Heart right ventricle (tissue), 16 donors: ENCODE measurements at regions of chr14 and their contacts with region 1.

Region 1: GRCh38 chr14:72651081-72651480 is 242.8 kb downstream of the DPF3 start:
- DNase-seq: no peak
- ATAC-seq: peak in 6 of 8 donors; percentile 26 to 57 (median 46)
- H3K4me3 ChIP-seq: no peak overlapping the region
- H3K27ac ChIP-seq: no peak overlapping the region
- H3K4me1 ChIP-seq: peaks cover 0 to 30% (median 17%) of the 10 kb centered on the region in 9 donors
- H3K27me3 ChIP-seq: no peaks in the 10 kb centered on the region
- CTCF ChIP-seq: no peak

Region 2: DNA sequence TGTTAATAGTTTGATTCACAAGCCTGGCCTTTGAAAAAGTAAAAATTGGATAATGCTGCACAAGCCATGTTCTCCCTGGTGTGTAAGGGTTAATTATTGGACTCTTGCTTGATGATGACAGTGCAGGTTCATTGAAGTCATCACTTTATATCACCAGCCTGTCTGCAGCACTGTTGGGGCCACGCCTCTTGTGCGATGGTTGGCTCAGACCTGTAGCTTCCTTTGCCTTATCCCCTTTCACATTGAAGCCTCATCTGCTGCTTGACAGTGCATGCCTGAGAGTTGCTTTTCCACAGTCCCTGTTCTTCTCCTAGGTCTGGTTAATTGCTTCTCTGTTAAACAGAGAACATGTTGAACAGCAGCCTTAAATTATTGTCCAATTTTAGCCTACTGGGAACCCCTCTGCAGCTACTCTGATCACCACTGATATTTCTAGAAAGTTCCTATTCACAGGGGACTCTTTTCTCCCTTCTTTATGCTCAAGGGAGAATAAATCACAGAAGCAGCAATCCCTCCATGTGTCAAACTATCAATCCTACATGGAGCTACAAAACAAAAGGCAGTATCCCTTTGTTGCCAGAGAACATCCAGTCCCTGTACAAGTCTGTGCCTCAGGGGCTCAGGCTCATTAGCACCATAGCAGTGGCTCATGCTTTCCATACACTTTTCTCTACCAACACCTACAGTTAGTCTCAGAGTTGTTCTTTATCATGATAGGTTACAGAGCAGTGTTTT is 396.7 kb before region 1 on chr14:
- intact Hi-C with region 1: no loop called
- DNase-seq: no peak
- ATAC-seq: peak in 4 of 8 donors; percentile 37 to 76 (median 56)
- H3K4me3 ChIP-seq: no peak overlapping the region
- H3K27ac ChIP-seq: no peak overlapping the region
- H3K4me1 ChIP-seq: peaks cover 0 to 21% (median 0%) of the 10 kb centered on the region in 9 donors
- H3K27me3 ChIP-seq: no peaks in the 10 kb centered on the region
- CTCF ChIP-seq: no peak

Region 3: GRCh38 chr14:72544619-72545387 is 106.3 kb before region 1 on chr14:
- intact Hi-C with region 1: loop called in 1 of 10 experiments (anchors 10 kb)
- DNase-seq: no peak
- ATAC-seq: peak in 2 of 8 donors; percentile 36 to 46
- H3K4me3 ChIP-seq: no peak overlapping the region
- H3K27ac ChIP-seq: no peak overlapping the region
- H3K4me1 ChIP-seq: peaks cover 3 to 22% (median 10%) of the 10 kb centered on the region in 9 donors
- H3K27me3 ChIP-seq: peaks cover 0 to 3% (median 0%) of the 10 kb centered on the region in 7 donors
- CTCF ChIP-seq: no peak

Region 4: DNA sequence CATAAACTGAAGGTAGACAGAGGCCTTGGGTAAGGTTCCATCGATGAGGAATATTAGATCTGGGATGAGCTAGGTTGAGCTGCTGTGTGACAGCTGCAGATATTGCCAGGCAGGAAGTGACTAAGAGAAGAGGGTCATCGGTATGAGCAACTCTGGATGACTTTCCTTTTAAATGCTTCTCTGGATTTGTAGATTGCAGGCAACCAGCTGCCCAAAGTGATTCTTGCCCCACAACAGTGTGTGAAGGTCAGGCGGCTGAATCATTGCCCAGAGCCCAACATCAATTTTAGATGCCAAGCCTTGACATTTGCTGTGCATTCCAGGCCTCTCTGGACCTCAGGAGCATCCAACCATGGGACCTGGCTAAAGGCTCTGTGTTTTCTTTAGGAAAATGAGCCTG is 13.1 kb before region 1 on chr14:
- intact Hi-C with region 1: no loop called
- DNase-seq: peak in 1 of 2 donors; percentile 37
- ATAC-seq: peak in 4 of 8 donors; percentile 46 to 90 (median 76)
- H3K4me3 ChIP-seq: no peak overlapping the region
- H3K27ac ChIP-seq: peak overlapping the region in 2 of 10 donors; percentile 19 to 41
- H3K4me1 ChIP-seq: peaks cover 0 to 25% (median 5%) of the 10 kb centered on the region in 9 donors
- H3K27me3 ChIP-seq: no peaks in the 10 kb centered on the region
- CTCF ChIP-seq: no peak

Region 5: DNA sequence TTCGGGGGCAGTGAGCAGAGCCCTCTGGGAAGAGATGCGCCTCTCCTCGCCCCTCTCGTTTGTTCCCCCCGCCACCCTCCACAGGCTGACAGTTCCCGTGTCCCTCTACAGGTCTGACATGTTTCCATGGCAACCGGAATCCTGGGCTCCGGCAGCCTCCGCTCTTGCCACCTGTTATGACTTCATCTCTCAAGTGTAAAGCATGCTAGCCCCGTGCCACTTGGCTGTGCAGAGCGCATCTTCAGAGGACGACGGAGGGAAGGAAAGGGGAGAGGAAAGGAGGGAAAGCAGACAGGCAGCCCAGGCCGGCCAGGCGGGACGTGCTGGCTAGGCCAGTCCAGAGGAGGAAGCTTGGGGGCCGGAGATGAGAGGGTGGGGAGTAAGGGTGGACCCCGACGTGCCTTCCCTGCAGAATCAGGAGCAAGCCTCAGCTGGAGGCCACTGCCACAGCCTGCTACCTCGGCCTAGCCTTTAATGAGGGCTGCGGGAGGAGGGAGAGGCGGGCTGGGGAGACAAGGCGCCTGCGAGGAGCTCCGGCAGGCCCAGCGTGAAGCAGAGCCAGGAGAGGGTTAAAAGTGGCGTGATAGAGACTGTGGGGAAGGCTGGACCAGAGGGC is 28.6 kb after region 1 on chr14:
- intact Hi-C with region 1: no loop called
- DNase-seq: no peak
- ATAC-seq: peak in 7 of 8 donors; percentile 6 to 52 (median 23)
- H3K4me3 ChIP-seq: no peak overlapping the region
- H3K27ac ChIP-seq: no peak overlapping the region
- H3K4me1 ChIP-seq: peaks cover 0 to 11% (median 7%) of the 10 kb centered on the region in 9 donors
- H3K27me3 ChIP-seq: no peaks in the 10 kb centered on the region
- CTCF ChIP-seq: no peak

Region 6: DNA sequence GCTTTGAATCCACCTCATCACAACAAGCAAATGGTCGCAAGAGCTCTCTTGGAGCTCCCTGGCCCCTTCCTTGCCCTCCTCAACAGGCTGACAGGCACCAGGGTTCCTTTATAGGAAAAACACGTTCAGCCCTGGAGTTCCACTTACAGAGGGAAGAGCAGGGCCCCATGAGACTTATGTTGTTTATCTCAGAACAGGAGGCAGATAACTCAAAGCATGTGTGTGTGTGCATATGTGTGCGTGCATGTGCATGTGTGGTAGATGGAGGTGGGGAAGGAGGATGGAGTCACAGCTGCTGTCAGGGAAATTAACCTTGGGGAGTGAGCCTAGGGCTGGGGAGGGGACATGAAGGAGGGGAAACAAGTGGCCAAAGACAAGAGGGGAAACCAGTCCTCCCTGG is 104.7 kb after region 1 on chr14:
- intact Hi-C with region 1: no loop called
- DNase-seq: no peak
- ATAC-seq: no peak
- H3K4me3 ChIP-seq: no peak overlapping the region
- H3K27ac ChIP-seq: no peak overlapping the region
- H3K4me1 ChIP-seq: peaks cover 0 to 4% (median 0%) of the 10 kb centered on the region in 9 donors
- H3K27me3 ChIP-seq: no peaks in the 10 kb centered on the region
- CTCF ChIP-seq: no peak